ENCODE measurements at regions of chr7 and their contacts with region 1.

Region 1: GRCh38 chr7:22559829-22560489 is 60.0 kb upstream of the STEAP1B start:
- DNase-seq: peak; percentile 9 to 63 (median 45)
- H3K4me3 ChIP-seq: no peak overlapping the region
- H3K4me3 Mint-ChIP-seq: no peak overlapping the region
- H3K27ac ChIP-seq: no peak overlapping the region
- H3K27ac Mint-ChIP-seq: peak overlapping the region in 1 of 8 donors; percentile 4
- H3K4me1 ChIP-seq: peaks cover 28% of the 10 kb centered on the region
- H3K4me1 Mint-ChIP-seq: peaks cover 22 to 29% (median 24%) of the 10 kb centered on the region in 3 donors
- H3K27me3 ChIP-seq: no peaks in the 10 kb centered on the region
- H3K27me3 Mint-ChIP-seq: peaks cover 7 to 25% of the 10 kb centered on the region in 2 donors

Region 2: GRCh38 chr7:22726345-22727185 is 166.6 kb after region 1 on chr7:
- CTCF ChIA-PET with region 1: interaction called, 14 read pairs
- POLR2A ChIA-PET with region 1: no interaction called
- DNase-seq: peak in 3 of 5 donors; percentile 2 to 37 (median 7)
- H3K4me3 ChIP-seq: no peak overlapping the region
- H3K4me3 Mint-ChIP-seq: peak overlapping the region in 6 of 7 donors; percentile 50 to 74 (median 65)
- H3K27ac ChIP-seq: no peak overlapping the region
- H3K27ac Mint-ChIP-seq: peak overlapping the region in 2 of 8 donors; percentile 45 to 48
- H3K4me1 ChIP-seq: peaks cover 14% of the 10 kb centered on the region
- H3K4me1 Mint-ChIP-seq: peaks cover 13 to 26% (median 23%) of the 10 kb centered on the region in 3 donors
- H3K27me3 ChIP-seq: no peaks in the 10 kb centered on the region
- H3K27me3 Mint-ChIP-seq: peaks cover 11 to 50% of the 10 kb centered on the region in 2 donors

Region 3: GRCh38 chr7:22782616-22783232 is 222.8 kb after region 1 on chr7:
- CTCF ChIA-PET with region 1: interaction called, 12 read pairs
- POLR2A ChIA-PET with region 1: no interaction called
- DNase-seq: peak; percentile 34 to 68 (median 42)
- H3K4me3 ChIP-seq: no peak overlapping the region
- H3K4me3 Mint-ChIP-seq: no peak overlapping the region
- H3K27ac ChIP-seq: no peak overlapping the region
- H3K27ac Mint-ChIP-seq: peak overlapping the region in 1 of 8 donors; percentile 23
- H3K4me1 ChIP-seq: no peaks in the 10 kb centered on the region
- H3K4me1 Mint-ChIP-seq: no peaks in the 10 kb centered on the region
- H3K27me3 ChIP-seq: no peaks in the 10 kb centered on the region
- H3K27me3 Mint-ChIP-seq: peaks cover 1 to 11% of the 10 kb centered on the region in 2 donors

Region 4: DNA sequence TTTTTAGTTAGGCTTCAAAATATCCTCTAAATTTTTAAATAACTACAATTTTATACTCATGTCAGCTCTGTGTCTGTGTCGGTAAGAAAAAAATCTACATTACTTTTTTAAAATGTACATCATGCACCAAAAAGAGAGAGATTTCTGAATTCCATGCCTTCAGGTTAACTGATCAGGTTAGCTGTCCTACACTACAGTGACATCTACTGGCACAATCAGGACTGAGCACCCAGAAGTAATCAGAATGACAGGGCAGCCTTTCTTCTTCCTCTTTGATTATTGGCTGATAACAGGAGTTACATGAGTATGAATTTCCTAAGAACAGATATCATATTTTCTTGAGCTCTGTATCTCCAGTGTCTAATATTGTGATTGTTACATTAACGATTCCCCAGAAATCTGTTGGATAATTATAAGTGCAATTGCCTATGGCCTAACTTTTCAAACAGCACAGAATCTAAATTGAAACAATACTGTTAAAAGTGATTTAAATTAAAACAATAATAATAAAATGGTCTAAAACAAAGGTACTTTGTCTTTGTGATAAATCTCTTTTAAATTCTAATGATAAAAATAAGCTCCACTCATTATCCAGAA is 495.7 kb after region 1 on chr7:
- CTCF ChIA-PET with region 1: interaction called, 25 read pairs
- POLR2A ChIA-PET with region 1: no interaction called
- DNase-seq: peak; percentile 6 to 67 (median 58)
- H3K4me3 ChIP-seq: no peak overlapping the region
- H3K4me3 Mint-ChIP-seq: no peak overlapping the region
- H3K27ac ChIP-seq: no peak overlapping the region
- H3K27ac Mint-ChIP-seq: no peak overlapping the region
- H3K4me1 ChIP-seq: no peaks in the 10 kb centered on the region
- H3K4me1 Mint-ChIP-seq: no peaks in the 10 kb centered on the region
- H3K27me3 ChIP-seq: no peaks in the 10 kb centered on the region
- H3K27me3 Mint-ChIP-seq: no peaks in the 10 kb centered on the region

Measured in CD8-positive, alpha-beta memory T cell (primary cell).